ENCODE measurements at regions of chr1 and their contacts with region 1.

Region 1: DNA sequence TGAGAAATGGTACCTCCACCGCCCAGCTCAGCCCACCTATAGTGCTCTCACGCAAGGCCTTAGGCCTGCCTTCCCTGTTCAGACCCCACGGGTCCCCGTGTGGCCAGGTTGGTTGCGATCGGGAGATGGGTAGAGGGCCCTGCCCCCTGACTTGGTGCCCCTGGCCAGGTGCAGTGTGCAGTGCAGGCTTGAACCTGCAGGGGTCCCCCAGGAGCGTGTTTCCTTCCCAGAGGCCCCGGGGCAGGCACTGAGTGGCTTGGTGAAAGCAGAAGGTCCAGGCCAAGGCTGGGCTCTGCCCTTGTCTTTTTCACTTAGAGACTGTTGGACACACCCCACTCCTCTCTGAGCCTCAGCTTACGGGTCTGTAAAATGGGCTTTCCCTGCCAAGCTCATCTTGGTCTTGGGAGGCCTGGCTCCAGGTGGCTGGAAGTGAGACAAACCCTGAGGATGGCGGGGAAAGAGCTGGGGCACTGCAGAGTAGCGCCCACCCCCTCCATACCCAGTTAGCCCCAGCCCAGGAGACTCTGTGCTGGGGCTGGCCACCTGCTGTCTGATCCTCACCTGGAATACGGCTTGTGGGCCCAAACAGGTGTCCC is 9.3 kb upstream of the HES5 start:
- DNase-seq: peak in 1 of 2 experiments; percentile 92
- H3K4me3 ChIP-seq: no peak overlapping the region
- H3K27ac ChIP-seq: no peak overlapping the region
- H3K4me1 ChIP-seq: peaks cover 0 to 36% (median 20%) of the 10 kb centered on the region in 4 experiments; a peak in 6 of 7 replicates
- H3K27me3 ChIP-seq: peaks cover 0 to 44% (median 33%) of the 10 kb centered on the region in 4 experiments; a peak in 6 of 7 replicates
- CTCF ChIP-seq: peak in 2 of 3 experiments; percentile 59 to 60; a peak in 3 of 4 replicates
- EP300 ChIP-seq: no peak
- POLR2A ChIP-seq: no peak
- RAD21 ChIP-seq: peak; percentile 36 to 48

Region 2: DNA sequence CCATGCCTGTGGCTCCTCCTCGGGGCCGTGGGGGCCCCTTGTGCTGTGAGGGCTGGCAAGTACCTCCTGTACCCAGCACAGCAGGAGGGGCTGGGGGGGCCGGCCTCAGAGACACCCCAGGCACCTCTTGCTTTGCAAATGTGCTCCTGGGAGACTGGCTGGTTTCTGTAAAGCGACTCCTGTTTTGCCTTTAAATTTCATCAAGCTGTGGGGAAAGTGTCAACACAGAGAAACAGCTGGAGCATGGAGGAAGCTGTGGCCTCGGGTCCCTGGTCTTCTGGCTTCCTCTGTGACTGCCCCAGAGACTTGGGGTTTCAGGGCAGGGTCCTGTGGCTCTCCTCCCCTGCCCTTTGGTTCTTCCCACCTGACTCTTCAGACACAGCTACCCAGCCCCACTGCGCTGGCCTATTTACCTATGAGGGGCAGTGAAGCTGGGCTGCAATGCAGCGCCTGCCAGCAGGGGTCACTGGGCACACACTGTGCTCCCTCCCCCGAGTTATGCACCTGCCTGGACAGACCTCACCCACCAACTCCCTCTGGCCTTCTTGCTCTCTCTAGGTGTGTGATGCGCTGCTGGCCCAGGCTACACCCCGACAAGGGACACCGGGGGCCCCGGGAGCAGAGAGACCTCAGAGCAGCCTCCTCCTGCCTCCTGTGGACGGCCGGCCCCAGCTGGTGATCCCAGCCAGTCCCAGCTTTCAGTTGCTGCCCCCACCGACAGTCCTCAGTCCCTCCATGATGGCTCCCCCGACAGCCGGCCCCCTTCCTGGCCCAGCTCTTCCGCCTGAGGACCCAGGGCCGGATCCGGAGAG is 109.4 kb before region 1 on chr1:
- CTCF ChIA-PET with region 1: no interaction called
- POLR2A ChIA-PET with region 1: no interaction called
- DNase-seq: no peak
- H3K4me3 ChIP-seq: no peak overlapping the region
- H3K27ac ChIP-seq: no peak overlapping the region
- H3K4me1 ChIP-seq: no peaks in the 10 kb centered on the region
- H3K27me3 ChIP-seq: 0 out of 7 replicates have a peak, but pooled peaks cover 0 to 2% (median 0%) of the 10 kb centered on the region in 4 experiments
- CTCF ChIP-seq: peak in 2 of 3 experiments; percentile 44 to 69; a peak in 3 of 4 replicates
- EP300 ChIP-seq: no peak
- POLR2A ChIP-seq: no peak
- RAD21 ChIP-seq: peak; percentile 46 to 55

Region 3: GRCh38 chr1:2519029-2519685 is 20.3 kb before region 1 on chr1:
- CTCF ChIA-PET with region 1: interaction called, 16 read pairs
- POLR2A ChIA-PET with region 1: no interaction called
- DNase-seq: no peak
- H3K4me3 ChIP-seq: no peak overlapping the region
- H3K27ac ChIP-seq: no peak overlapping the region
- H3K4me1 ChIP-seq: peaks cover 0 to 4% (median 1%) of the 10 kb centered on the region in 4 experiments; a peak in 2 of 7 replicates
- H3K27me3 ChIP-seq: no peaks in the 10 kb centered on the region
- CTCF ChIP-seq: no peak
- EP300 ChIP-seq: no peak
- POLR2A ChIP-seq: no peak
- RAD21 ChIP-seq: no peak

Region 4: DNA sequence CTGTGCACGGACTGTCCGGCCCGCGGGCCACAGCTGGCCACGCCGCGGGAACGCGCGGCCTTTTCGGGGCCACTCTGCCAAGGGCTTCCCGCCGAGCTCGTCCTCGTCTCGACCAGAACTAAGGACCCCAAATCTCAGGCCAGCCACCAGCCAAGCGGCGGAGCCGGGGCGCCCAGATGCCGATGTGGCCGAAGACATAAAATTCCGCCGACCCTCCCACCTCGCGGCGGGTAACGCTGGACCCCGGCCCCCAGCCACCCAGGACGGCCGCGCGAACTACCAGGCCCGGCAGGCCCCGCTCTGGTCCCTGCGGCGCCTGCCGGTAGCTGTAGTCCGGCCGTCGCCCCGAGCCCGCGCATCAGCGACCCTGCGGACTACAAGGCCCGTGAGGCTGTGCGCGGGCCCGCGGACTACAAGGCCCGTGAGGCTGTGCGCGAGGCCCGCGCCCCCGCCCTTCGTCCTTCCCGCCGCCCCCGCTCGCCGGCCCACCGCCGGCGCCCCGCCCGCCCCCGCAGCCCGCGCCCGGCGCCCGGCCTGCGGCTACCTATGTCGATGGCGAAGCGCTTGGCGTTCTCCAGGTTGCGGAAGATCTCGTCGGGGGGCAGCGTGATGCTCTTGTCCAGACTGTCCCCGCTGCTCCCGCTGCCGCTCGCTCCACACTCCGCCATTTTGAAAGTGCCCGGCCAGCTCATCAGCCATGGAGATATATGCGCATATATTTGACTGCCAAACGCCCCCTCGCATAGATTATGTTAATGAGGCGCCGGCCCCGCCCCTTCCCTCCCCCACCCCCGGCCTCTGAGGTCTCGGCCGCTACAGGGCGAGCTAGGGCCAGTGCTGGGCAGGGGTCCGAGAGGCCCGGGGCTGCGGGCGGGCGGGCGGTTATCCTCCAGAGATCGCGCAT is 13.2 kb before region 1 on chr1 and contains the start of gene PANK4:
- CTCF ChIA-PET with region 1: interaction called, 16 read pairs
- POLR2A ChIA-PET with region 1: interaction called, 13 read pairs
- DNase-seq: peak; percentile 66 to 88
- H3K4me3 ChIP-seq: peak within 1 kb of the TSS; percentile 51 to 94 (median 90)
- H3K27ac ChIP-seq: peak within 1 kb of the TSS; percentile 60; the same call in 1 of the 2 replicates
- H3K4me1 ChIP-seq: peaks cover 0 to 40% (median 21%) of the 10 kb centered on the region in 4 experiments; a peak in 6 of 7 replicates
- H3K27me3 ChIP-seq: peaks cover 22 to 45% (median 42%) of the 10 kb centered on the region in 4 experiments
- CTCF ChIP-seq: no peak
- EP300 ChIP-seq: no peak
- POLR2A ChIP-seq: peak in 1 of 2 experiments; percentile 88; a peak in 2 of 3 replicates
- RAD21 ChIP-seq: no peak; a peak in 1 of 4 replicates
- total RNA-seq, gene PANK4: 29.7 and 35.4 TPM in 2 replicates

Region 5: GRCh38 chr1:2561898-2562545 is 22.6 kb after region 1 on chr1:
- CTCF ChIA-PET with region 1: interaction called, 17 read pairs
- POLR2A ChIA-PET with region 1: no interaction called
- DNase-seq: no peak
- H3K4me3 ChIP-seq: no peak overlapping the region
- H3K27ac ChIP-seq: no peak overlapping the region
- H3K4me1 ChIP-seq: peaks cover 0 to 5% (median 0%) of the 10 kb centered on the region in 4 experiments; a peak in 1 of 7 replicates
- H3K27me3 ChIP-seq: no peaks in the 10 kb centered on the region
- CTCF ChIP-seq: peak in 2 of 3 experiments; percentile 61 to 69; a peak in 3 of 4 replicates
- EP300 ChIP-seq: no peak
- POLR2A ChIP-seq: no peak
- RAD21 ChIP-seq: peak; percentile 25 to 56; a peak in 3 of 4 replicates

Region 6: GRCh38 chr1:2801535-2802291 is 262.3 kb after region 1 on chr1 and contains the start of gene TTC34:
- CTCF ChIA-PET with region 1: no interaction called
- POLR2A ChIA-PET with region 1: no interaction called
- DNase-seq: no peak
- H3K4me3 ChIP-seq: no peak within 1 kb of the TSS
- H3K27ac ChIP-seq: no peak within 1 kb of the TSS
- H3K4me1 ChIP-seq: no peaks in the 10 kb centered on the region
- H3K27me3 ChIP-seq: no peaks in the 10 kb centered on the region
- CTCF ChIP-seq: no peak
- EP300 ChIP-seq: no peak
- POLR2A ChIP-seq: no peak
- RAD21 ChIP-seq: peak in 1 of 2 experiments; percentile 22; a peak in 1 of 4 replicates
- total RNA-seq, gene TTC34: 0.36 and 0.50 TPM in 2 replicates